PC-3 (cell line): ENCODE measurements at regions of chr2 and their contacts with region 1.

Region 1: GRCh38 chr2:160252278-160252887 is 52.3 kb upstream of the ITGB6 start:
- DNase-seq: peak; percentile 75
- ATAC-seq: peak; percentile 37; the same call in 1 of the 2 replicates
- H3K4me3 ChIP-seq: no peak overlapping the region
- H3K27ac ChIP-seq: no peak overlapping the region
- H3K4me1 ChIP-seq: peaks cover 17% of the 10 kb centered on the region
- H3K27me3 ChIP-seq: no peaks in the 10 kb centered on the region
- CTCF ChIP-seq: peak; percentile 82

Region 2: GRCh38 chr2:160180172-160180571 is 72.2 kb before region 1 on chr2:
- CTCF ChIA-PET with region 1: no interaction called
- POLR2A ChIA-PET with region 1: no interaction called
- intact Hi-C with region 1: no loop called
- DNase-seq: no peak
- ATAC-seq: no peak
- H3K4me3 ChIP-seq: no peak overlapping the region
- H3K27ac ChIP-seq: no peak overlapping the region
- H3K4me1 ChIP-seq: peaks cover 14% of the 10 kb centered on the region
- H3K27me3 ChIP-seq: no peaks in the 10 kb centered on the region
- CTCF ChIP-seq: no peak

Region 3: DNA sequence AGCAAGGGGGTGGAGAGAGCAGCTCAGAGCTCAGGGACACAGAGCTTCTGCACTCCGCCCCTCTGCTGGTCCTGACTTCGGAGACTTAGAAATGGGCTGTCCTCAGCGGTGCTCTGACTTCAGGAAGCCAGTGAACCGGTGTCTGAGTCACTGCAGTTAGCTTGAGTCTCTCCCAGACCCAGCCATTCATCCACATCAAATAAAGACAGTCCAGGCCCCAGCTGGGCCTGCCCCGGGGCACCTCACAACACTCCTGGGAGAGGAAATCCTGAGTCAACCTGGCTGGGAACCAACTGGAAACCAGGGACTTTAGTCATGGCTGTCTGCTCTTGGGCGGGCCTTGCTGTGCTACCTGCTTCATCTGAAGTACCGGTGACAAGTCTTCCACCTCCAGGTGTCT is 46.9 kb before region 1 on chr2:
- CTCF ChIA-PET with region 1: no interaction called
- POLR2A ChIA-PET with region 1: no interaction called
- intact Hi-C with region 1: loop called (anchors 2 kb)
- DNase-seq: peak; percentile 99
- ATAC-seq: peak; percentile 89
- H3K4me3 ChIP-seq: peak overlapping the region; percentile 41; the same call in 1 of the 2 replicates
- H3K27ac ChIP-seq: peak overlapping the region; percentile 80
- H3K4me1 ChIP-seq: peaks cover 68% of the 10 kb centered on the region
- H3K27me3 ChIP-seq: no peaks in the 10 kb centered on the region
- CTCF ChIP-seq: no peak

Region 4: GRCh38 chr2:160279813-160280465 is 27.6 kb after region 1 on chr2:
- CTCF ChIA-PET with region 1: no interaction called
- POLR2A ChIA-PET with region 1: interaction called, 11 read pairs
- intact Hi-C with region 1: no loop called
- DNase-seq: peak; percentile 69
- ATAC-seq: peak; percentile 76
- H3K4me3 ChIP-seq: no peak overlapping the region
- H3K27ac ChIP-seq: peak overlapping the region; percentile 52
- H3K4me1 ChIP-seq: peaks cover 14% of the 10 kb centered on the region
- H3K27me3 ChIP-seq: no peaks in the 10 kb centered on the region
- CTCF ChIP-seq: no peak

Region 5: GRCh38 chr2:160533476-160533875 is 281.1 kb after region 1 on chr2:
- CTCF ChIA-PET with region 1: no interaction called
- POLR2A ChIA-PET with region 1: no interaction called
- intact Hi-C with region 1: no loop called
- DNase-seq: no peak
- ATAC-seq: no peak
- H3K4me3 ChIP-seq: no peak overlapping the region
- H3K27ac ChIP-seq: no peak overlapping the region
- H3K4me1 ChIP-seq: peaks cover 7% of the 10 kb centered on the region
- H3K27me3 ChIP-seq: no peaks in the 10 kb centered on the region
- CTCF ChIP-seq: no peak

Region 6: DNA sequence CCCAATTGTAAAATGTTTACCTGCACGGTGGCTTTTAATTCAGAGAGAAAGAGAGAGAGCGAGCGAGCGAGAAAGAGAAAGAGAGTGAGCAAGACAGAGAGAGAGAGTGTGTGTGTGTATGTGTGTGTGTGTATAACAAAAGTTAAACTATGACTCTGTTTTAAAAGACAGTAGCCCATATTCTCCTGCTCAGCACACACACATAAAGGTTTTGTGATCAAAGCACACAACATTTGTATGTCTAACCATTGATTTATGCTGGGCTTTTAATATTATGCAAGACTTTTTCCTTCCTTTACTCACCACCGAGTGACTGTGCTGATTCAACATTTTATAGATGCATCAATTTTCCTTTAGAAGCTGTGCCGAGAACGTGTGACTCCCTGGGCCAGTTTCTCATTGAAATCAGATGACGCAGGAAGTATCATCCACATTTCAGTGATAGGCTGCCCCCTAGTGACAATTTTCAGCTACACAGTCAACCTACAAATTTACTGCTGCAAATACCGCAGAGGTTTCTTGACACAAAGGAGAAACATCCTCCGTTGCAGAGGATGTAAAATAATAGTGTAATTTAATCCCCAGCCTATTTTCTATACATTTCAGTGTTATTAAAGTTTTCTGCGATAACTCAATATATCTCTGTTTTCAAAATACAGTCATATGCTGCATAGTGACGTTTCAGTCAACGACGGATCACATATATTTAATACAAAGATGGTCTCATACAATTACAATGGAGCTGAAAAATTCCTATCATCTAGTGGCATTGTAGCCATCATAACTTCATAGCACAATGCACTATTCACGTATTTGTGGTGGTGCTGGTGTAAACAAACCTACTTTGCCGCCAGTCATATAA is 742.0 kb after region 1 on chr2:
- CTCF ChIA-PET with region 1: no interaction called
- POLR2A ChIA-PET with region 1: no interaction called
- intact Hi-C with region 1: loop called (anchors 1 kb)
- DNase-seq: peak; percentile 92
- ATAC-seq: peak; percentile 89
- H3K4me3 ChIP-seq: no peak overlapping the region
- H3K27ac ChIP-seq: no peak overlapping the region
- H3K4me1 ChIP-seq: peaks cover 7% of the 10 kb centered on the region
- H3K27me3 ChIP-seq: no peaks in the 10 kb centered on the region
- CTCF ChIP-seq: peak; percentile 94